Common myeloid progenitor, CD34-positive (primary cell): ENCODE measurements at regions of chr2 and their contacts with region 1.

Region 1: DNA sequence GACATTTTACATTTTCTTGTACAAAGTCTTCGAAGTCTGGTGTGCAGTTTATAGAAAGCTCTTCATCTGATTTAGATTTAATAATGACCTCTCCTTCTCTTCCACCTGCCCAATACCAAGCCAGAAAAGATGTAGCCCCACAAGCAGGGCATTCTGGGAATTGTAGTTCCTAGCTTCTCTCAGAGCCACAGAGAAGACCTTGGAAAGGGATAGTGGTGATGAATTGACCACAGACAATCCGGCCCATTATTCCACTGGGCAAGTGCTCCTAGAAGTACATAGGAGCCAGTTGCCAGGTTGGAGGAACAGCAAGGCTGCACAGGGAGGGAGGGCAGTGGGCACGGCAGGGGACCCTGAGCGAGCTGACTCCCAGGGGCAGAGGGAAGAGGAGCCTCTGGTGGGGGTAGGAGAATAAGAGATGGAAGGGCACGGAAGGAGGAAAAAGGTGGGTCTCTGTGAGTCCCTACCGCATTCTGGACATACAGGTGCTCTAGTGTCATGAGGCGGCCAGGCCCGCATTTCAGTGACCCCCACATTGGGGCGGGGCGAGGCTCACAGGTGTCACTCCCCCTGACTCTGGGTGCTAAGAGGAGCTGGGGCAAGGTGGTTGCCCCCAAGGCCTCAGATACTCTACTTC is 152.5 kb upstream of the HAAO start:
- DNase-seq: peak in 1 of 3 donors; percentile 2
- H3K4me3 ChIP-seq: no peak overlapping the region
- H3K27ac ChIP-seq: peak overlapping the region in 1 of 2 experiments; percentile 2
- H3K4me1 ChIP-seq: peaks cover 7 to 68% (median 57%) of the 10 kb centered on the region in 4 experiments
- H3K27me3 ChIP-seq: no peaks in the 10 kb centered on the region

Region 2: DNA sequence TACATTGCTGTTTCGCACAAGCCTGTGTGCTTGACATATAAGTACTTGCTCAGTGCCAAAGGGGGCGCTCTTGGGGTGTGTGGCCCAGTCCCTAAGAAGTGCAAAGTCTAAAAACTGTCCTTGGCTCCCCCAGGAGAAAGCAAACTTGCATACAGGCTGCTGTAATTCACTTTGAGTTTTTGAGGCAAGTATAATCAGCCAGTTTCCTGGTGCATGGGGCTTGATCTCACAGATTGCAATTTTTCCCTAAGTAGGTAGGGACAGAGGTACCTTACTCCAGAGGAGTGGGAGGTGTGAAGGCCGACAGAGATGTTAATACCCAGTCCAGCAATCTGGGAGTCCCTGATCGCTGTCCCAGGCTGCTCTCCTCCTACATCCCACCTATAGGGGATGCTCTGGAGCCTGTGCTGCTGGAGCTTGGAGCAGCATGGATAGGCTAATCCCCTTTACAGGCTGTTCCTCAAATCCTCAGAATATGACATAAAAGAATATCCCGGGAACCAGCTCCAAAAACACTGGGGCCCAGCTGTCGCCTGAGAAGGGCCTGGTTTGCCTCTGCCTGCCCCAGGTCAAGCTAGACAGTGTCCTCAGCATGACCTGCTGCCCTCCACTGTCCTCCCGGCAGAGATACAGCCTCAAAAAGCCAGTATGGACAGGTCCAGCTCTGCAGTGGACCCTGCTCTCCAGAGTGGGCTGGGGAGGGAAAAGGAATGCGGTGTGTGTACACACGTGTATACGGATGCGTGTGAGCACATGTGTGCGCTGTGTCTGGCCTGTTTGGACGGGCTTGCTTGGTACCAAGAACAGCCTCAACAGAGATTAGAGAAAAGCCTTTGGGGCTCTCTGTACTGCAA is 16.0 kb before region 1 on chr2:
- CTCF ChIA-PET with region 1: interaction called, 180 read pairs
- POLR2A ChIA-PET with region 1: interaction called, 20 read pairs
- DNase-seq: peak; percentile 82 to 93 (median 91)
- H3K4me3 ChIP-seq: no peak overlapping the region
- H3K27ac ChIP-seq: peak overlapping the region; percentile 91 to 93
- H3K4me1 ChIP-seq: peaks cover 20 to 98% (median 97%) of the 10 kb centered on the region in 4 experiments
- H3K27me3 ChIP-seq: no peaks in the 10 kb centered on the region

Region 3: GRCh38 chr2:43024515-43025011 is 79.7 kb after region 1 on chr2:
- CTCF ChIA-PET with region 1: interaction called, 21 read pairs
- POLR2A ChIA-PET with region 1: no interaction called
- DNase-seq: peak; percentile 41 to 63 (median 52)
- H3K4me3 ChIP-seq: no peak overlapping the region
- H3K27ac ChIP-seq: no peak overlapping the region
- H3K4me1 ChIP-seq: peaks cover 2 to 34% (median 29%) of the 10 kb centered on the region in 4 experiments
- H3K27me3 ChIP-seq: no peaks in the 10 kb centered on the region

Region 4: DNA sequence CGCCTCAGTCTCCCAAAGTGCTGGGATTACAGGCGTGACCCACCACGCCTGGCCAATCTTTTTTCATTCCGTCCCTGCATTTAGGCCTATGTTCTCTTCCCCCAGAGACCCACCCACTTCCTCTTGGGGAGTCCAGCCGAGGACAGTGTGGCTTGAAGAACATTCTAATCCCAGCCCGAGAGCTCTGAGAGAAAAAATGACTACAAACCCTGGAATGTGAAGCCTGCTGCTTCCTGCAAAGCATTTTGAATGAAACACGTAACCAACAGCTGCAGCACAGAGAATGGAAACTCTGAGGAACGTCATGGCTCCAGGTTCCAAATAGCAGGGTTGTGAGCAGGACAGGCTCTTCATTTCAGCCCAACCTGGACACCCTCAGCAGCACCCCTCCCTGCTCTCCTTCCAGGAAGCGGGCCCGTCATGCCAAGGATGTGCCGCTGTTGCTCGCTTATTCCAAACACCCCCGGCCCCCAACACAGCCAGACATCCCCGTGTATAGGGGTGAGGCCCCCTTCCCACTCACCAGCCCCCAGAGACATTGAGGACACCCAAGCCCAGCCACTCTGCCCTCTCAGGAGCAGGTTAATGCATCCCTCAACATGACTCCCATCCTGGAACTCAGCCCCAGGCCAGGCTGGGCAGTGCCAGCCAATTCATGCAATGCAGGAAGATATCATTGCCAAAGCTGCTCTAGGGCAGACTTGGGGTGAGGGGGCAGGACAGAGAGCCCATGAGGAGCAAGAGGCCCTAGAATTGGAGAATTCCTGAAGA is 141.7 kb after region 1 on chr2:
- CTCF ChIA-PET with region 1: no interaction called
- POLR2A ChIA-PET with region 1: no interaction called
- DNase-seq: no peak
- H3K4me3 ChIP-seq: no peak overlapping the region
- H3K27ac ChIP-seq: no peak overlapping the region
- H3K4me1 ChIP-seq: peaks cover 2 to 47% (median 25%) of the 10 kb centered on the region in 4 experiments
- H3K27me3 ChIP-seq: no peaks in the 10 kb centered on the region

Region 5: DNA sequence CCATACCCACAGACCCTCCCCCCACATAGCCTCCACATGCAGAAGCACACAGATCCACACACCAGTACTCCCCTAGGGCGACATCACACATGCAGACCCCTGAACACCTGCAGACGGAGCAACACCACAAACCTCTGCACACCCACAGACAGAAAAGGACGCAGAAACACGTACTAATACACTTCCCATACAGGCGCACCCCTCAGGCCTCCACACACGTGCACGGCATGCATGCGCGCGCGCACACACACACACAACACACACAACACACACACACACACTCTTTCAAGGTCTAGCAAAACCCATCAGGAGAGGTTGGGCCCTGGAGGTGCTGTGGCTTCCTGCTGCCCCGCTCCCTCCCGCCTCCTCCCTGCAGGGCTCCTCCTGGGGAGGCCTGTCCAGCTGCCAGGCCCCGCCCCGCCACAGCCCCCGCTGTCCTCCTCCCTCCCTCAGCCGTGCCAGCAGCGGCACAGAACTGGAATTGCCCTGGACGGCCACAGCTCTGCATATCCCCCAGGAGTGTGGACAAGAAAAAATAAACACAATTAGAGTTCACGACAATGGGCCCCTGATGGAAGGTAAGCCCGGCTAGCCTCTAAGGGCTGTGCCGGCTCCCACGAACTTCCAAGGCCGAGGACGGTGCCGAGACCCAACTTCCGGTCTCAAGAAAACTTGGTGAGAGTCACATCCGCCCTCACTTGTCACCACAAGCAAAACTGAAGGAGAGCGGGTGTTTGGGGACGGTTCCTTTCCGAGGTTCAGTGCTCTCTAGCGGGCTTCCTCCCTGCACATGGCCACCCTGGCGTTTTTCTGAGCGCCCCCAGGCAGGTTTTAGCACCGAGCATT is 274.7 kb after region 1 on chr2:
- CTCF ChIA-PET with region 1: interaction called, 71 read pairs
- POLR2A ChIA-PET with region 1: interaction called, 6 read pairs
- DNase-seq: peak; percentile 91 to 95 (median 94)
- H3K4me3 ChIP-seq: peak overlapping the region in 6 of 7 experiments; percentile 89 to 100 (median 98)
- H3K27ac ChIP-seq: peak overlapping the region; percentile 81 to 91
- H3K4me1 ChIP-seq: peaks cover 27 to 61% (median 48%) of the 10 kb centered on the region in 4 experiments
- H3K27me3 ChIP-seq: no peaks in the 10 kb centered on the region

Region 6: DNA sequence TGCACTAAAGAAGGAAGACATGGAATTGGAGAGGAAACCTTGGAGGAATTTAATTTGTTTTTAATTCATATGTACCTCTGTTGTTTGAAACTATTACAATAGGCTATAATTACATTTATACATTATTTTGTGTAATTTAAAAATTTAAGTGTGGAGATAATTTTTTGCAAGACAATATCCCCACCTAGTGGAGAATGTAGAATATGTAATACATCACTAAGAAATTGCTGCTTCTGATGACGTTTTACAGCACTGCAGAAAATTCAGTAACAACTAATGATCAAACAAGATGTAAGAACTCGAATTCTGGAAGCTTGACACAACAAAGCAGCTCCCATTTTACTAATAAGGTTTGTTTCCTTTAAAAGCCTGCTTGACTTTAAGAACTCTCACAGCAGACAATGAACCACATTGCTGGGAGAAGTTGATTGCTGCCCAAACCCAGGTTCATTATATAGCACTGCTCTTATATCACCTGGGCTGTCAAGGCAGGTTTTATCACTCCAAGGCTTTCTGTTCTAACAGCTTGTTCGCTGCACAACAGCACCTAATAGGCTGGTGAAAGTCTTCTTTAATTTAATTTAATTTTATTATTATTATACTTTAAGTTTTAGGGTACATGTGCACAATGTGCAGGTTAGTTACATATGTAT is 597.5 kb after region 1 on chr2:
- CTCF ChIA-PET with region 1: interaction called, 15 read pairs
- POLR2A ChIA-PET with region 1: no interaction called
- DNase-seq: peak; percentile 68 to 85 (median 83)
- H3K4me3 ChIP-seq: no peak overlapping the region
- H3K27ac ChIP-seq: no peak overlapping the region
- H3K4me1 ChIP-seq: peaks cover 15 to 34% (median 22%) of the 10 kb centered on the region in 4 experiments
- H3K27me3 ChIP-seq: no peaks in the 10 kb centered on the region